Activated CD4-positive, alpha-beta T cell treated with anti-CD3 and anti-CD28 coated beads for 36 hours (primary cell): ENCODE measurements at regions of chr18 and their contacts with region 1.

Region 1: GRCh38 chr18:877238-877637 is 27.4 kb upstream of the ADCYAP1 start:
- DNase-seq: no peak
- ATAC-seq: no peak
- H3K4me3 Mint-ChIP-seq: no peak overlapping the region
- H3K27ac Mint-ChIP-seq: no peak overlapping the region
- H3K4me1 Mint-ChIP-seq: peaks cover 7% of the 10 kb centered on the region
- H3K27me3 Mint-ChIP-seq: peaks cover 4% of the 10 kb centered on the region

Region 2: DNA sequence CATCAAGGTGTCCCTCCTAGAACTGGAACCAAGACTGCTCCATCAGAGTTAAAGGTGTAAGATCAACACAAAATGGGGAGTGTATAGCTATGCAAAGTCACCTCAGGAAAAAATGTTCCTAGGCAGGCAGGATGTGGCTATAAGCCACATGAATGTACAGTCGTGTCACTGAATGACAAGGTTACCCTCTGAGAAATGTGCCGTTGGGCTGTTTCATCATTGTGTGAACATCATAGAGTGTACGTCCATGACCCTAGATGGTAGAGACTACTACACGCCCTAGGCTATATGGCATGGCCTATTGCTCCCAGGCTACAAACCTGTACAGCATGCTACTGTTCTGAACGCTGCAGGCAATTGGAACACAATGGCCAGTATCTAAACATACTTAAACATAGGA is 195.3 kb before region 1 on chr18:
- CTCF ChIA-PET with region 1: no interaction called
- POLR2A ChIA-PET with region 1: interaction called, 11 read pairs
- intact Hi-C with region 1: no loop called
- DNase-seq: peak; percentile 76
- ATAC-seq: peak; percentile 96
- H3K4me3 Mint-ChIP-seq: no peak overlapping the region
- H3K27ac Mint-ChIP-seq: peak overlapping the region; percentile 84
- H3K4me1 Mint-ChIP-seq: peaks cover 22% of the 10 kb centered on the region
- H3K27me3 Mint-ChIP-seq: no peaks in the 10 kb centered on the region